Mucosa of descending colon (tissue), 3 donors: ENCODE measurements at regions of chr6 and their contacts with region 1.

Region 1: GRCh38 chr6:110039981-110040383 is 61.9 kb downstream of the GPR6 start:
- DNase-seq: peak in 2 of 3 donors; percentile 47 to 67
- ATAC-seq: peak; percentile 77
- H3K4me3 ChIP-seq: no peak overlapping the region
- H3K4me1 ChIP-seq: no peaks in the 10 kb centered on the region
- CTCF ChIP-seq: no peak

Region 2: GRCh38 chr6:109526905-109527628 is 512.9 kb before region 1 on chr6:
- intact Hi-C with region 1: loop called in 1 of 2 experiments (anchors 10 kb)
- DNase-seq: peak in 1 of 3 donors; percentile 78
- ATAC-seq: peak; percentile 64
- H3K4me3 ChIP-seq: no peak overlapping the region
- H3K4me1 ChIP-seq: no peaks in the 10 kb centered on the region
- CTCF ChIP-seq: peak; percentile 18

Region 3: GRCh38 chr6:110102411-110102810 is 62.4 kb after region 1 on chr6:
- intact Hi-C with region 1: no loop called
- DNase-seq: no peak
- ATAC-seq: no peak
- H3K4me3 ChIP-seq: no peak overlapping the region
- H3K4me1 ChIP-seq: no peaks in the 10 kb centered on the region
- CTCF ChIP-seq: no peak